HCT116 (cell line): ENCODE measurements at regions of chr21 and their contacts with region 1.

Region 1: GRCh38 chr21:35940074-35940927 is 120.0 kb downstream of the SETD4 start:
- DNase-seq: peak; percentile 68
- ATAC-seq: peak; percentile 99
- H3K4me3 ChIP-seq: no peak overlapping the region
- H3K27ac ChIP-seq: no peak overlapping the region
- H3K4me1 ChIP-seq: peaks cover 0 to 5% of the 10 kb centered on the region in 2 experiments; a peak in 2 of 4 replicates
- H3K27me3 ChIP-seq: no peaks in the 10 kb centered on the region
- CTCF ChIP-seq: peak; percentile 54 to 75 (median 58); a peak in 5 of 6 replicates
- POLR2A ChIP-seq: no peak
- RAD21 ChIP-seq: peak; percentile 82

Region 2: GRCh38 chr21:34688145-34688544 is 1252.2 kb before region 1 on chr21:
- CTCF ChIA-PET with region 1: no interaction called
- POLR2A ChIA-PET with region 1: no interaction called
- RAD21 ChIA-PET with region 1: no interaction called
- intact Hi-C with region 1: loop called (anchors 1 kb)
- DNase-seq: peak; percentile 15
- ATAC-seq: peak; percentile 59
- H3K4me3 ChIP-seq: no peak overlapping the region
- H3K27ac ChIP-seq: no peak overlapping the region
- H3K4me1 ChIP-seq: peaks cover 10 to 15% of the 10 kb centered on the region in 2 experiments
- H3K27me3 ChIP-seq: peaks cover 3% of the 10 kb centered on the region; the same call in 1 of the 2 replicates
- CTCF ChIP-seq: peak; percentile 19 to 58 (median 52); a peak in 5 of 6 replicates
- POLR2A ChIP-seq: no peak
- RAD21 ChIP-seq: peak; percentile 21; the same call in 1 of the 2 replicates

Region 3: DNA sequence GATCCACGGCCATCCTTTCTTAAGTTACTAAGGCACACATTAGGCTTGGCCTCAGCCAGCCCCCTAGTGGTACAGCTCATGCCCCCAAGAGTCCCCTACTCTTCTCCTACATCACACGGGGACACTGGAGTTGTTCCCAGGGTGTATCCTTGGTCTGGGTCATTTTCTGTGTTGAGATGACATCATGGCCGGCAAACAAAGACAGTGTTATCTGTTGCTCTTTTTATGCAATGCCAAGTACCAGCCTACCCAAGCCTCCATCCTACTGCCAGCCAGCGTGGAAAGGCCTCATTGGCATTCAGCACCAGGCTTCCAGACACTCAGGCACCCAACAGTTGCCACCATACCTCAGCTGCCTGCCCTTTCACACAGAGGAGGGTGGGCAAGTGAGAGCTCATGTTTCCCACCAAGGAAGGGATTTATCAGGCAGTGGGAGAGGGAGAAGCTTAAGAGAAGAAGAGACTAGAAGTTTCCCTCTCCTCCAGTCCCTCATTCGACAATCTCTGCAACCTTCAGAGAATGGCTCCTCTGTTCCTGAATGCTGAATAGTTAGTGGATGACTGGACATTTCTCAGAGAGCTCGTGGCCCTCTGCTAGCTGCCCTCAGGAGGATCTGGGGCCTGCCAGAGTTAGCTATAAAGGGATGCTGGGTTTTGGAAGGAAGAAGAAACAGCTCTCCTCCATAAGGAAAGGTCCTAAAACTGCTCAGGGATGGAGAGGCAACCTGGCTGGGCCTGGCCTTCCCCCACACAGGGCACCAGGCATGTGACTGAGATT is 147.2 kb after region 1 on chr21:
- CTCF ChIA-PET with region 1: no interaction called
- POLR2A ChIA-PET with region 1: no interaction called
- RAD21 ChIA-PET with region 1: no interaction called
- intact Hi-C with region 1: no loop called
- DNase-seq: no peak
- ATAC-seq: peak; percentile 72
- H3K4me3 ChIP-seq: no peak overlapping the region
- H3K27ac ChIP-seq: no peak overlapping the region
- H3K4me1 ChIP-seq: no peaks in the 10 kb centered on the region
- H3K27me3 ChIP-seq: no peaks in the 10 kb centered on the region
- CTCF ChIP-seq: peak in 2 of 3 experiments; percentile 16 to 36; a peak in 2 of 6 replicates
- POLR2A ChIP-seq: no peak
- RAD21 ChIP-seq: no peak